ENCODE measurements at regions of chr10 and their contacts with region 1.

Region 1: DNA sequence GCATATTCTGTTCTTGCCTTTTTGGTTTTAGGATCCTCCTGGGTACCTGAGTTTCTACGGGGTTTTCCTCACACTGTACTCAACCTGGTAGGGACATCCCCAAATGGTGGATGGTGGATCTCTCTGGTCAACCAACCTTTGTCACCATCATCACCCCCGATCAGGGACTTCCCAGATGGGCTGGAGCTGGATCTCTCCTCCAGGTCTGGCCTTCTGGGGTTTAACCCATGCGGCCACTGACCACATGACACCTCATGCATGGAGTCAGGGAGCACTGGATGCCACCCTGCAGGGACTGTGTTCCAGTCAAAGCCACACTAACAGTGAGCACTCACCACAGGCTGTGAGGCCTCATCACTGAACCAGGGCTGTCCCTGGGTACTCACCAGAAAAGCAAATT is 80.0 kb downstream of the CELF2 start:
- DNase-seq: no peak
- ATAC-seq: peak in 1 of 4 donors; percentile 28
- H3K4me3 ChIP-seq: no peak overlapping the region
- H3K27ac ChIP-seq: no peak overlapping the region
- H3K4me1 ChIP-seq: peaks cover 20% of the 10 kb centered on the region
- H3K27me3 ChIP-seq: no peaks in the 10 kb centered on the region
- CTCF ChIP-seq: no peak

Region 2: GRCh38 chr10:11131112-11131639 is 33.5 kb after region 1 on chr10:
- intact Hi-C with region 1: loop called in 1 of 2 experiments (anchors 2 kb)
- DNase-seq: no peak
- ATAC-seq: peak in 1 of 4 donors; percentile 42
- H3K4me3 ChIP-seq: no peak overlapping the region
- H3K27ac ChIP-seq: no peak overlapping the region
- H3K4me1 ChIP-seq: peaks cover 12% of the 10 kb centered on the region
- H3K27me3 ChIP-seq: no peaks in the 10 kb centered on the region
- CTCF ChIP-seq: no peak

Region 3: GRCh38 chr10:11236234-11236633 is 138.5 kb after region 1 on chr10:
- intact Hi-C with region 1: no loop called
- DNase-seq: no peak
- ATAC-seq: no peak
- H3K4me3 ChIP-seq: no peak overlapping the region
- H3K27ac ChIP-seq: no peak overlapping the region
- H3K4me1 ChIP-seq: no peaks in the 10 kb centered on the region
- H3K27me3 ChIP-seq: no peaks in the 10 kb centered on the region
- CTCF ChIP-seq: no peak

Measured in psoas muscle (tissue), 8 donors.